Thyroid gland (tissue), 4 donors: ENCODE measurements at regions of chr22 and their contacts with region 1.

Region 1: GRCh38 chr22:23849009-23850006 is 8.4 kb upstream of the SLC2A11 start:
- DNase-seq: peak; percentile 78 to 85
- H3K4me3 ChIP-seq: no peak overlapping the region
- H3K27ac ChIP-seq: no peak overlapping the region
- H3K4me1 ChIP-seq: peaks cover 8 to 24% of the 10 kb centered on the region in 2 donors
- H3K27me3 ChIP-seq: no peaks in the 10 kb centered on the region
- CTCF ChIP-seq: peak; percentile 78 to 97 (median 96)
- POLR2A ChIP-seq: no peak

Region 2: GRCh38 chr22:23767673-23768548 is 81.4 kb before region 1 on chr22 and contains the start of gene CHCHD10:
- intact Hi-C with region 1: loop called (anchors 5 kb)
- DNase-seq: peak; percentile 87 to 92
- H3K4me3 ChIP-seq: peak within 1 kb of the TSS; percentile 31 to 80 (median 78)
- H3K27ac ChIP-seq: peak within 1 kb of the TSS; percentile 64 to 89 (median 84)
- H3K4me1 ChIP-seq: peaks cover 13 to 32% of the 10 kb centered on the region in 2 donors
- H3K27me3 ChIP-seq: no peaks in the 10 kb centered on the region
- CTCF ChIP-seq: peak; percentile 44 to 86 (median 73)
- POLR2A ChIP-seq: peak; percentile 71 to 96
- total RNA-seq, gene CHCHD10: 9.4 to 154 (median 47.0) TPM